HCT116 (cell line): ENCODE measurements at regions of chr6 and their contacts with region 1.

Region 1: GRCh38 chr6:52419809-52420670 is at the start of gene EFHC1:
- DNase-seq: peak; percentile 94
- ATAC-seq: peak; percentile 91
- H3K4me3 ChIP-seq: peak within 1 kb of the TSS; percentile 70 to 89
- H3K27ac ChIP-seq: peak within 1 kb of the TSS; percentile 61
- H3K4me1 ChIP-seq: peaks cover 22 to 67% of the 10 kb centered on the region in 2 experiments
- H3K27me3 ChIP-seq: no peaks in the 10 kb centered on the region
- CTCF ChIP-seq: no peak
- POLR2A ChIP-seq: peak; percentile 83
- RAD21 ChIP-seq: no peak
- total RNA-seq, gene EFHC1: 12.4 TPM

Region 2: DNA sequence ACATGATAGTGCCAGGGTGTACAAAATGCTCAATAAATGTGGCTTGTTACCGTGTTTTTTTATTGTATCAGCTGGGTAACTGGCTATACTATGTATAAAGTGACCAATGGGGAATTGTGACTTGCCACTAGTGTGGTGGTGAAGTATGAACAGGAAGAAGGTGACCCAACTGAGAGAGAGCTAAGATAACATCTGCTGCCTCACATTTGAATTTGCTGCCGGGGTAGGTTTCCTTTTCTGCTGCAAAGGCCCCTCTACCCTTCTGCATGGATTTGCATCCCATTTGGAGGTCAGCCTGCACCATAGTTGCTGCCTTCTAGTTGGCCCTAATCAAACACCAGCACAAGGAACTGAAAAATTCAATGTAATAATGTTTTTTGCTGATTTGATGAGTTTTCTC is 209.8 kb before region 1 on chr6:
- CTCF ChIA-PET with region 1: no interaction called
- POLR2A ChIA-PET with region 1: no interaction called
- RAD21 ChIA-PET with region 1: no interaction called
- intact Hi-C with region 1: no loop called
- DNase-seq: no peak
- ATAC-seq: no peak
- H3K4me3 ChIP-seq: no peak overlapping the region
- H3K27ac ChIP-seq: no peak overlapping the region
- H3K4me1 ChIP-seq: no peaks in the 10 kb centered on the region
- H3K27me3 ChIP-seq: peaks cover 22% of the 10 kb centered on the region
- CTCF ChIP-seq: no peak
- POLR2A ChIP-seq: no peak
- RAD21 ChIP-seq: no peak

Region 3: GRCh38 chr6:52407467-52407866 is 12.6 kb before region 1 on chr6:
- CTCF ChIA-PET with region 1: interaction called, 7 read pairs
- POLR2A ChIA-PET with region 1: interaction called, 11 read pairs
- RAD21 ChIA-PET with region 1: no interaction called
- intact Hi-C with region 1: no loop called
- DNase-seq: no peak
- ATAC-seq: peak; percentile 83
- H3K4me3 ChIP-seq: no peak overlapping the region
- H3K27ac ChIP-seq: no peak overlapping the region
- H3K4me1 ChIP-seq: peaks cover 0 to 5% of the 10 kb centered on the region in 2 experiments; a peak in 1 of 4 replicates
- H3K27me3 ChIP-seq: no peaks in the 10 kb centered on the region
- CTCF ChIP-seq: peak; percentile 68 to 75 (median 69)
- POLR2A ChIP-seq: no peak
- RAD21 ChIP-seq: peak; percentile 76

Region 4: GRCh38 chr6:52577022-52577777 is 157.2 kb after region 1 on chr6 and contains the start of gene TRAM2:
- CTCF ChIA-PET with region 1: interaction called, 3 read pairs
- POLR2A ChIA-PET with region 1: no interaction called
- RAD21 ChIA-PET with region 1: no interaction called
- intact Hi-C with region 1: loop called (anchors 5 kb)
- DNase-seq: peak; percentile 27
- ATAC-seq: peak; percentile 84
- H3K4me3 ChIP-seq: peak within 1 kb of the TSS; percentile 74 to 89
- H3K27ac ChIP-seq: peak within 1 kb of the TSS; percentile 74
- H3K4me1 ChIP-seq: peaks cover 11 to 34% of the 10 kb centered on the region in 2 experiments; a peak in 3 of 4 replicates
- H3K27me3 ChIP-seq: no peaks in the 10 kb centered on the region
- CTCF ChIP-seq: 0 out of 6 replicates have a peak, but pooled peaks of 1 of the 3 experiments have one; percentile 6
- POLR2A ChIP-seq: peak; percentile 57
- RAD21 ChIP-seq: no peak
- total RNA-seq, gene TRAM2: 21.3 TPM

Region 5: GRCh38 chr6:52598123-52598823 is 178.2 kb after region 1 on chr6:
- CTCF ChIA-PET with region 1: interaction called, 13 read pairs
- POLR2A ChIA-PET with region 1: no interaction called
- RAD21 ChIA-PET with region 1: interaction called in 1 of 2 experiments, 3 read pairs
- intact Hi-C with region 1: loop called (anchors 1 kb)
- DNase-seq: peak; percentile 69
- ATAC-seq: peak; percentile 95
- H3K4me3 ChIP-seq: no peak overlapping the region
- H3K27ac ChIP-seq: no peak overlapping the region
- H3K4me1 ChIP-seq: peaks cover 0 to 27% of the 10 kb centered on the region in 2 experiments; a peak in 2 of 4 replicates
- H3K27me3 ChIP-seq: no peaks in the 10 kb centered on the region
- CTCF ChIP-seq: peak; percentile 72 to 85 (median 84)
- POLR2A ChIP-seq: no peak
- RAD21 ChIP-seq: peak; percentile 68

Region 6: DNA sequence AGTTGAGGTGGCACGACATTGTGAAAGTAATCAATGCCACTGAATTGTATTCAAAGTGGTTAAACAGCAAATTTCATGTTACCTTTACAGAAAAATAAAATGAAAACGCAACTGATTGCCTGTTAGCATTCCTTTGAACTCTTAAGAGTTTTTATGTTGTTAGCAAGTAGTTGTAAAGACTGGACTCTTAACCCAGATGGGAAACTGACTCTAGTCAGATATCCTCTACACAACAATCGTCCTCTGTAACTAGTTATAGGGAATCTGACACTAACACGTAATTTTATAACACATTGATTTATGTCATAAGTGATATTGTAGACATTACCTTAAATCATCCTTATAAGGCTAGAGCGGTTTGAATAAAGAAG is 642.1 kb after region 1 on chr6:
- CTCF ChIA-PET with region 1: no interaction called
- POLR2A ChIA-PET with region 1: no interaction called
- RAD21 ChIA-PET with region 1: no interaction called
- intact Hi-C with region 1: loop called (anchors 1 kb)
- DNase-seq: no peak
- ATAC-seq: no peak
- H3K4me3 ChIP-seq: peak overlapping the region; percentile 68 to 76
- H3K27ac ChIP-seq: peak overlapping the region; percentile 77; the same call in 1 of the 2 replicates
- H3K4me1 ChIP-seq: peaks cover 18 to 39% of the 10 kb centered on the region in 2 experiments; a peak in 3 of 4 replicates
- H3K27me3 ChIP-seq: no peaks in the 10 kb centered on the region
- CTCF ChIP-seq: no peak
- POLR2A ChIP-seq: no peak
- RAD21 ChIP-seq: no peak